RWPE1 (cell line): ENCODE measurements at regions of chr5 and their contacts with region 1.

Region 1: DNA sequence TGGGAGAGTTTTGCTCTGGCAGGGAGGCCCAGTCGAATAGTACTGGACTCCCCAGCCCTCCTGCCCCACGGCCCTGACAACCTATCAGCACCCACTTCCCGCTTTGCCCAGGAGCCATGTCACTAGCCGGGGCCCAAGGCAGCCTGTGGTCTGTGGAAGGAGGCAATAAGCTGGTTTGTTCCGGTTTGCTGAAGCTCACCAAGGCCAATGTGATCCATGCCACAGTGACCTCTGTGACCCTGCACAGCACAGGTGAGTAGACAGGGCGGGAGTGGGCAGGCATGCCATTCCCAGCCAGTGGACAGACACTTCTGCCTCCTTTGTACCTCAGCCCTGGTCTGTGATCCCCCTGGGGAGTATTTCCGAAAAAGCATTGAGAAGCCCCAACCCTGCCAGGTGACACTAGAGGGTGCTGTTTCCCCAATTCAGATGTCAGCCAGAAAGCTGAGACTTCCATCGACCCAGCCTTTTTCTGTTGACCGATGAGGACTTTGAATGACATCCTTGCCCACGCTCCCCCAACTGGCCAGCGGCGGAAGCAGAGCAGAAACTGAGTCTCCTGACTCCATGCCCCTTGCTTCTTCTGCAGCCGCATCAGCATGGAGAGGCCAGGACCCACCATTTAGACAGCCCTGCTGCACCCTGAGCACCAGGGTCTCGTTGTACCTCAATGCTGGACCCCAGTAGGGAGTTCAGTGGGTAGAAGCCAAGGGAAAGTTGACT is 9.6 kb downstream of the PCYOX1L start:
- DNase-seq: peak; percentile 85
- H3K27ac ChIP-seq: peak overlapping the region; percentile 5; the same call in 1 of the 2 replicates
- CTCF ChIP-seq: peak; percentile 85

Region 2: GRCh38 chr5:149317281-149318048 is 49.9 kb before region 1 on chr5:
- CTCF ChIA-PET with region 1: interaction called, 40 read pairs
- POLR2A ChIA-PET with region 1: interaction called, 4 read pairs
- DNase-seq: peak; percentile 75
- H3K27ac ChIP-seq: peak overlapping the region; percentile 51
- CTCF ChIP-seq: peak; percentile 83

Region 3: DNA sequence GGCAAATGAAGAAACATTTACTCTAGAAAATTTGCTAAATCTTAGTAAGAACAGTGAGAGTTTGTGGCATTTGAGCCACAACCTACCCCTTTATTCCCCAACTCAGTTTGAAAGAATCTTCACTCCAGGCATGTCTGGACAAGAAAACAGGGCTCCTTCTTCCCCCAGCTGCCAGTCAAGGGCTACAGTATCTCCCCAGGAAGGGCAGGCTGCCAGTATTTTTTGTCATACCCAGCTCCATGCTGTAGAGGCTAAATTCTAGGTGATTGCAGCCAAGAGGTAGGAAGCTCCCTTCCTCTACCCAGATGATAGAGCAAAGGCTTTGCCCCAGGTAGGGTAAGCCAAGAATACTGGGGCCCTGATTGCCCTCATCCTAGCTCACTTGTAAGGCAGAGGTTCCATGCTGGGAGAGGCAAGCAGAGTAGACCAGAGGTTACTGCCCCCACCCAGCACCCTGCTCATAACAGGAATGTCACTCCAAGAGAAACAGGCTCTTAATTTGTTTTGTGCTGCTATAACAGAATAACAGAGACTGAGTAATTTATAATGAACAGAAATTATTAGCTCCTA is 42.2 kb before region 1 on chr5:
- CTCF ChIA-PET with region 1: interaction called, 40 read pairs
- POLR2A ChIA-PET with region 1: no interaction called
- DNase-seq: peak; percentile 97
- H3K27ac ChIP-seq: peak overlapping the region; percentile 64
- CTCF ChIP-seq: no peak

Region 4: DNA sequence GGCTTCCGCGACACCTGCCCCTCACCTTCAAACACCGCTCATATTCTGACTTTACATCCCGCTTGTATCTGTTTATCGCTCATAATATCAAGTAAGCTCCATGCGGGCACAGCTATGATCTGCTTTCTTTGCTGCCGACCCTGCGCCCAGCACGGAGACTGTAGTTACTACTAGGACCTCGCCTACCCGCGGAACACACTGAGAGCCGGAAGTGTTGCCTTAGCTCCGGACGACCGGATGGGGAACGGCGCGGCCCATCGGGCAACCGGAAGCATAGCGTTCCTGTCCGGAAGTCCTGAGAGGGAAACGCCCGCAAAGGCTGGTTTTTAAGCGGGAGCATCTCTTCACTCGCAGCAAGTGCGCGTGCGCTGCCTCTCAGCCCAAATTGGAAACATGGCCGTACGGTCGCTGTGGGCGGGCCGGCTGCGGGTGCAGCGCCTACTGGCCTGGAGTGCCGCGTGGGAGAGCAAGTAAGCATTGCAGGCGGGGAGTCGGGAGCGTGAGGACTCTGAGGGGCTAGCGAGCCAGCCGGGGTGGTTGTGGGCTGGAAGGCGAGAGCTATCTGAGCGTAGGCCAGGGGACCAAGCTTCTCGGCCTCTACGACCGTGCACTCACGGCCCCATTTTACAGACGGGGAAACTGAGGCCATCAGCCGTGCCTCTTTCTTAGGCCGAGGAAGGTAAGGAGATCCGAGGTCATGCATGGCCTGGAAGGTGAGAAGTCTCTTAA is 22.1 kb before region 1 on chr5 and contains the start of gene GRPEL2:
- CTCF ChIA-PET with region 1: interaction called, 18 read pairs
- POLR2A ChIA-PET with region 1: no interaction called
- DNase-seq: peak; percentile 99
- H3K27ac ChIP-seq: peak within 1 kb of the TSS; percentile 83
- CTCF ChIP-seq: no peak

Region 5: DNA sequence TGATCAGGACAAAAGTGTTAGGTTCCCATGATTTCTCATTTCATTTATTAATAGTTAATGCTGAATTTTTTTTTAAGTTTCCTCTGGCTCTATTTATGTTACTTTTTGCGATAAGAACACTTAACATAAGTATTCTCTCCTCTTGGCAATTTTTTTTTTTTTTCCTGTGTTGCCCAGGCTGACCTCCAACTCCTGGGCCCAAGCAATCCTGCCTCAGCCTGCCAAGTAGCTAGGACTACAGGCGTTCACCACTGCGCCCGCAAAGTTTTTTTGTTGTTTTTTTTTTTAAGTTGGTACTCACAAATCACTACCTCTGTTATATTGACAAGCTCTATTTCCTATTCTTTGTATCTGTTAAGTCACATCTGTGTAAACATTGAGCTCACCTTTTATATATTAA is 15.2 kb before region 1 on chr5:
- CTCF ChIA-PET with region 1: interaction called, 18 read pairs
- POLR2A ChIA-PET with region 1: no interaction called
- DNase-seq: no peak
- H3K27ac ChIP-seq: no peak overlapping the region
- CTCF ChIP-seq: no peak

Region 6: DNA sequence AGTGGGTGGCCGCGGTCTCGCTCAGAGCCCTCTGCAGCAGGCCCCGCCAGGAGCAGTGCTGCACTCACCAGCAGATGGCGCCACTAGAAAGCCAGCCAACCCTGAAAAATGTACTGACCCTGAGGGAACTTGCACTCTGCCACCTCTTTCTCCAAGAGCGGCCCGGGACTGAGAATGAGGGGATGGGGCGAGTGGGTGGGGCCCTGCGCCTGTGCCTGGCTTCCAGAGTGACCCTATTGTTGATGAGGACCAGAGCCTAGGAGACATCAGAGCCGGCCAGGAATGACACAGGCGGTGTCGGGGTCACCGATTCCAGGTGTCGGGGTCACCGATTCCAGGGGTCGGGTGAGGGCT is 14.6 kb after region 1 on chr5:
- CTCF ChIA-PET with region 1: interaction called, 26 read pairs
- POLR2A ChIA-PET with region 1: no interaction called
- DNase-seq: peak; percentile 89
- H3K27ac ChIP-seq: peak overlapping the region; percentile 42
- CTCF ChIP-seq: peak; percentile 99

Region 7: GRCh38 chr5:149434162-149435014 is 67.0 kb after region 1 on chr5:
- CTCF ChIA-PET with region 1: interaction called, 22 read pairs
- POLR2A ChIA-PET with region 1: interaction called, 9 read pairs
- DNase-seq: peak; percentile 86
- H3K27ac ChIP-seq: peak overlapping the region; percentile 23
- CTCF ChIP-seq: peak; percentile 94